ENCODE measurements at regions of chr13 and their contacts with region 1.

Region 1: GRCh38 chr13:97459215-97459777 is 25.3 kb downstream of the RAP2A start:
- DNase-seq: no peak
- ATAC-seq: no peak
- H3K4me3 ChIP-seq: no peak overlapping the region
- H3K27ac ChIP-seq: no peak overlapping the region
- H3K4me1 ChIP-seq: peaks cover 11% of the 10 kb centered on the region
- H3K27me3 ChIP-seq: no peaks in the 10 kb centered on the region
- CTCF ChIP-seq: no peak
- EP300 ChIP-seq: no peak
- POLR2A ChIP-seq: no peak
- RAD21 ChIP-seq: no peak

Region 2: DNA sequence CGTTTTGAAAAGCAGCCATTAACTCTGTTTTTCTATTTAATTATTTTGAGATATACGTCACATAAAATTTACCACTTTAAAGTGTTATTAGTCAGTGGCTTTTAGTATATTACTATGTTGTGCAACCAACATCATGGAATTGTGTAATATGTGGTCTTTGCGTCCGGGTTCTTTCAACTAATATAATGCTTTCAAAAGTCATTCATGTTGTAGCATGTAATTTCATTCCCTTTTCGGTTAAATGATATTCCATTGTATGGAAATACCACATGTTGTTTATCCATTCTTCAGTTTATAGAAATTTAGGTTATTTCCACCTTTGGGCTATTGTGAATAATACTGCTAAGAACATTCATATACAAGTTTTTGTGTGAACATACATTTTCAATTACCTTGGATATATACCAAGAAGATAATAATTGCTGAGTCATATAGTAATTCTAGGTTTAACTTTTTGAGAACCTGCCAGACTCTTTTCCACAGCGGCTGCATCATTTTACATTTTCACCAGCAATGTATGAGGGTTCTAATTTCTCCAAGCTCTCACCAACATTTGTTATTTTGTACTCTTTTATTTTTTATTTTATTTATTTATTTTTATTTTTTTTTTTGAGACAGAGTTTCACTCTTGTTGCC is 1934.9 kb before region 1 on chr13:
- CTCF ChIA-PET with region 1: no interaction called
- POLR2A ChIA-PET with region 1: no interaction called
- in situ Hi-C with region 1: no loop called
- intact Hi-C with region 1: loop called (anchors 5 kb)
- DNase-seq: no peak
- ATAC-seq: no peak
- H3K4me3 ChIP-seq: no peak overlapping the region
- H3K27ac ChIP-seq: no peak overlapping the region
- H3K4me1 ChIP-seq: no peaks in the 10 kb centered on the region
- H3K27me3 ChIP-seq: no peaks in the 10 kb centered on the region; a peak in 1 of 5 replicates
- CTCF ChIP-seq: no peak
- EP300 ChIP-seq: no peak
- POLR2A ChIP-seq: no peak
- RAD21 ChIP-seq: no peak